A673 (cell line): ENCODE measurements at regions of chr11 and their contacts with region 1.

Region 1: GRCh38 chr11:110481523-110481922 is 51.8 kb downstream of the FDX1 start:
- DNase-seq: no peak
- H3K4me3 ChIP-seq: no peak overlapping the region
- H3K27ac ChIP-seq: no peak overlapping the region
- H3K4me1 ChIP-seq: peaks cover 16% of the 10 kb centered on the region
- H3K27me3 ChIP-seq: no peaks in the 10 kb centered on the region
- CTCF ChIP-seq: no peak

Region 2: DNA sequence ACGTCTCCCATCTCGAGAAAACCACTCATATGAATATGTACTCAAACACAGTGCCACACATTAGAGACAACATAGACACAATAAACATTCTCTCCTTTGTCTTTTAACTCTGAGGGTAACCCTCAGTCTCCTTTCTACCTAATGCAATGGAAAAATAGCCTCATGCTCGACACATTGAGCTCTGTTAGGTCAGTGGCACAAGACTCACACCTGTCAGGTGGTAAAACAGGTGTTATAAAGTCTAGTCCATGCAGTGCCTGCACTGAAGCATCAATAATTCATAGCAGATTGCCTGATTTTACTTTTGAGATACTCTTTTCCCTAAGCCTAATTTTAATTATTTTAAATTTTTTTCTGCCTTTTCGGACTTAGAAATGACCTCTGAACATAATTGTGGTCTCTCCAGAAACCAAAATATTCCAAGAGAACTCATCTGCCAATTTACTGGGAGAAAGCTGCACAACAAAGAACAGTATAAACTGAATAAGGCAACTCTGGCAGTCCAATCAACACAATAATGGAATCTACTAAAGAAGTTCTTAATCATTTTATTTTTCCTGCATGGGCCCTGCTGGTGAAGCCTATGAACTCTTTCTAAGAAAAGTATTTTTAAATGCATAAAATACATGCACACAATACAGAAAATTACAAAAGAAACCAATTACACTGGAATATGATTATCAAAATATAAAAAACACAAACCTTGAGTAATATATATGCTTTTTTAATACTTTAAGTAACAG is 195.1 kb before region 1 on chr11:
- CTCF ChIA-PET with region 1: interaction called, 11 read pairs
- POLR2A ChIA-PET with region 1: no interaction called
- intact Hi-C with region 1: no loop called
- DNase-seq: no peak
- H3K4me3 ChIP-seq: no peak overlapping the region
- H3K27ac ChIP-seq: peak overlapping the region; percentile 6
- H3K4me1 ChIP-seq: peaks cover 34% of the 10 kb centered on the region
- H3K27me3 ChIP-seq: no peaks in the 10 kb centered on the region
- CTCF ChIP-seq: no peak